ENCODE measurements at regions of chr6 and their contacts with region 1.

Region 1: DNA sequence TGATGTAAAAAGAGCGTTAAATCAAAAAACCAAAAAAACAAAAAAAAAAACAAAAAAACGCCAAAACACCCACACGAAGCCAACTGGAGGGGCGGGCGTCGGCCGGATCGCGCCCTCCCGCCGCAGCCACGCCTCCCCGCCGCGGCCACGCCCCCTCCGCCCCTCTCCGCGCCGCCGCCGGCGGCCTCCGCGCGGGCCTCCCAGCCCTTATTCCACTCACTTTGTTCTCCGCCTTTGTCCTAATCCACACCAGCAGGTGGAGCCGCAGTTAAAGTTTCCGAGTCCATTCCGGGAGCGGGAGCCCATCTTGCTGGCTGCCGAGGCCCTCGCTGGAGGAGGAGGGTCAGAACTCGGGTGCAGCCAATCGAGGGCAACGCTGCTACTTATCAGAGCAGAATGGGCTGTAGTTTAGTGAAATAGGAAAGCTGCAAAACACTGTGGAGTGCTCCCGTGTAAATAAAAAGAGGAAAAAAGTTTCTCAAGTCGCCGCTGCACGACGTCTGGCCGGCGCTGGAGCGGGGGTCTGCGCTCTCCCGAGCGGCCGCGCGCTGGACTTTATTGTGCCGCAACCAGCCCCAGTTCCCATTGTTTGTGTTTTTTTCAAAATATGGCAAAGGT is at the start of gene ASF1A:
- DNase-seq: peak; percentile 93
- ATAC-seq: peak; percentile 93
- H3K4me3 ChIP-seq: peak within 1 kb of the TSS; percentile 91 to 98
- H3K27ac ChIP-seq: peak within 1 kb of the TSS; percentile 96
- H3K4me1 ChIP-seq: peaks cover 35% of the 10 kb centered on the region
- H3K27me3 ChIP-seq: no peaks in the 10 kb centered on the region
- CTCF ChIP-seq: peak; percentile 91
- total RNA-seq, gene ASF1A: 28.5 TPM

Region 2: DNA sequence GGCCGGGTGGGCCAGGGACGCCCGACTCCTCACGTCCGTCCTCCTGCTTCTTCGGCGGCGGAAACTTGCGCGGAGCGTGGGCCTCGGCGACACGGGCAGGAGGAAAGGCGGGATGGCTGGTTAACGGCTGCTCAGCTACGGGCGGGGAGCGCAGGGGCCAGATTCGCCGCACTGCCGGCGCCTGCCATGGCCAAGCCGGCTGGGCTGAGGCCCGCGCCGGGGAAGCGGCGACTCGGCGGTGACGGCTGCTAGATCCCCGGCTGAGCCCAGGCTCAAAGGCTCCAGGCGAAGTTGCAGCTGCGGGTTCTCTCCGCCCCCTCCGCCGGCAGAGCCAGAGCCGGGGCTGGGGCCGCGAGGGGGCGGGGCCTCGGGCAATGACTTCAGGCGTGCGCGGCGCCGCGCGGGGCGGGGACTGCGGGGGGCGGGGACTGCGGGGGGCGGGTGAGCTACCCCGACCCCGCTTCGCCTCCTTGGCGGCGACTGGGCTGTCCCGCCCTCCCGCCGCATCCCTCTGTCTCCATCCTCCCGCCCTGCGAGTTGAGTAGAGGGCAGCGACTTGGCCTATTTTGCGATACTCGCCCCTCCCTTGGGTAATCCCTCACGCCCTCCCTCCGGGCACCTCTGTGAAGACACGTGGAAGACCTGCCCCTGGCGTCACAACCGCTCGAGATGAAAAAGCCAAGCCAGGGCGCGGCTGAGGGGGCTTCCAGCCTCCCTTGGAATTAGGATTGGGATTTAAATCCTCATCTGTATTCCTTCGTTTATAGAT is 242.4 kb before region 1 on chr6 and contains the start of gene CEP85L:
- CTCF ChIA-PET with region 1: no interaction called
- POLR2A ChIA-PET with region 1: no interaction called
- in situ Hi-C with region 1: no loop called
- intact Hi-C with region 1: loop called (anchors 5 kb)
- DNase-seq: peak; percentile 38
- ATAC-seq: peak; percentile 98
- H3K4me3 ChIP-seq: peak within 1 kb of the TSS; percentile 81 to 90
- H3K27ac ChIP-seq: peak within 1 kb of the TSS; percentile 88
- H3K4me1 ChIP-seq: peaks cover 20% of the 10 kb centered on the region
- H3K27me3 ChIP-seq: peaks cover 5% of the 10 kb centered on the region; the same call in 1 of the 2 replicates
- CTCF ChIP-seq: no peak
- total RNA-seq, gene CEP85L: 6.7 TPM

Measured in Panc1 (cell line).